Motor neuron (in vitro differentiated cells): ENCODE measurements at regions of chr1 and their contacts with region 1.

Region 1: GRCh38 chr1:203273206-203273868 is 32.0 kb upstream of the BTG2 start:
- ATAC-seq: peak; percentile 86 to 96 (median 90)
- H3K4me3 ChIP-seq: no peak overlapping the region
- H3K27ac ChIP-seq: peak overlapping the region; percentile 2 to 43
- H3K4me1 ChIP-seq: peaks cover 21% of the 10 kb centered on the region in 2 donors

Region 2: DNA sequence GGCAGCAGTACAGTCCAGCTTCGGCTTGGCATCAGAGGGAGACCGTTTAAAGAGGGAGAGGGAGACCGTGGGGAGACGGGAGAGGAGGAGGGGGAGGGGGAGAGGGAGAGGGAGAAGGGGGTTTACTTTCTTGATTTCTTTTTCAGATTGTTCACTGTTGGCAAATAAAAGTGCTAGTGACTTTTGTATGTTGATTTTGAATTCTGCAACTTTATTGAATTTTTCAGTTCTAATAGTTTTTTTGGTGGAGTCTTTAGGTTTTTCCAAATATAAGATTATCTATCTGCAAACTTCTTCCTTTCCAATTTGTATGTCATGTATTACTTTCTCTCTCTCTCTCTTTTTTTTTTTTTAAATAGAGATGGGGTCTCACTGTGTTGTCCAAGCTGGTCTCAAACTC is 820.8 kb before region 1 on chr1:
- in situ Hi-C with region 1: no loop called
- ATAC-seq: no peak
- H3K4me3 ChIP-seq: no peak overlapping the region
- H3K27ac ChIP-seq: no peak overlapping the region
- H3K4me1 ChIP-seq: no peaks in the 10 kb centered on the region

Region 3: DNA sequence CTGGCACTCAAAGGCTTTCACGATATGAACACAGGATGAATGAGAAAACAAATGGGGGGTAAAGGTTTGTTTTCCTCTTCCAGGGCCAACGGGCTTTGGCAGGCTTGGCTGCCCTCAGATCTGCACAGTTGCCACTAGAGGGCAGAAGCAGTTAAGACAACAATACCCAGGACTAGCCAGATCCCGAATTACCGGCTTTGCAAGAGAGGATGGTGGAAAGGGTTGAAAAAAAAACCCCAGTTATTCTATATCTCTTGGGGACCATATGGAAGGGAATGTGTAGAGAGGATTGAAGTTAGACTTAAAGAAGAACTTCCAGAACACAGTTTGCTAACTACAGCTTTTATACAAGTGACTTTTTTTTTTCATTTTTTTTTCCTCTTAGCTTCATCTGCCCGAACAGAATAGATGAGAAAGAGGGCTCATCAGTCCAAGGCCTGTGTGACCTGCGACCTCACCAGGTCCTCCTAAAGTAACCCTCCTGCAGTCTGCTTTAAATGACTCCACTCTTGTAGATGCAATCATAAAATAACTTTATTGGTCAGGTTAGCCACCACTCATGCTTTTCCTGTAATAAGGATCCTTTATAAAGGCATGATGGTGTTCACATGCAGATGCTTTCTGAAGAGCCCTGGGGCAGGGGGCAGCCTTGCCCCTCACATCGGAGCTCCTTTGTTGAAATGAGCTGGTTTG is 66.9 kb after region 1 on chr1:
- in situ Hi-C with region 1: loop called in 3 of 9 experiments (anchors 5 to 10 kb)
- ATAC-seq: peak; percentile 66 to 95 (median 90)
- H3K4me3 ChIP-seq: no peak overlapping the region
- H3K27ac ChIP-seq: no peak overlapping the region
- H3K4me1 ChIP-seq: peaks cover 12 to 13% of the 10 kb centered on the region in 2 donors

Region 4: DNA sequence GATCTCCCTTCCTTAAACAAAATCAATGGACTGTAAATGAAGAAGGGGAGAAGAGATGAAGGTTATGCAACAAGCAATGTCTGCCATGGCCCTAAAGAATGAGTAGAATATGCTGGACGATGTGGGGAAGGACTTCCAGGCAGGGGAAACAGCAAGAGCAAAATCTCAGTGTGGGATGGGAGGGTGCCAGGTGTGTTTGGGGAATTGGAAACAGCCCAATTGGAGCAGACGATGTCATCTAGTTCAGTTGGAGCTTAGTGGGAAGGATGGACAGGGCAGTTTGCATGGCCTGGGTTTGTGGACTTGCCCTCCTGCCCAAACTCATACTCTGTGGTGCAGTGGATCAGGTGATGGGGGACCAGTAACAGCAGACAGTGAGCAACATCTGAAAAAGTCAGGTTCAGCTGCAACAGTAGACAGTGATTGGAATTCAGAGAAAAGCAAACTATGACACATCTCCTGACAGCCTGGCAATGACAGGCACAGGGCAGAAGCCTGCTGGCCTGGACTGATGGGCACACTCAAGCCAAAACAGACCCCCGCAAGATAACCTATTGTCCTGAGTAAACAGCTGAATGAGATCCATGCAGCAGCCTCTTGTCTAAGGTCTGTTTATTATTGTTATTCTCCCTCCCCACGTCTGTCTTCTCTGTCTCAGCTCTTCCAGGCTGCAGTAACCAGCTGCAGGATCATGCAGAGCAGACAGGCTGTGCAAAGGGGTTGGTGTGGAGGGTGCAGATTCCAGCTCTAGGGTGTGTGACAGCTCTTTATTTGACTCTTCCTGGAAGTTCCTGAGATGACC is 151.7 kb after region 1 on chr1:
- in situ Hi-C with region 1: no loop called
- ATAC-seq: peak; percentile 39 to 92 (median 88)
- H3K4me3 ChIP-seq: no peak overlapping the region
- H3K27ac ChIP-seq: no peak overlapping the region
- H3K4me1 ChIP-seq: peaks cover 8 to 16% of the 10 kb centered on the region in 2 donors

Region 5: DNA sequence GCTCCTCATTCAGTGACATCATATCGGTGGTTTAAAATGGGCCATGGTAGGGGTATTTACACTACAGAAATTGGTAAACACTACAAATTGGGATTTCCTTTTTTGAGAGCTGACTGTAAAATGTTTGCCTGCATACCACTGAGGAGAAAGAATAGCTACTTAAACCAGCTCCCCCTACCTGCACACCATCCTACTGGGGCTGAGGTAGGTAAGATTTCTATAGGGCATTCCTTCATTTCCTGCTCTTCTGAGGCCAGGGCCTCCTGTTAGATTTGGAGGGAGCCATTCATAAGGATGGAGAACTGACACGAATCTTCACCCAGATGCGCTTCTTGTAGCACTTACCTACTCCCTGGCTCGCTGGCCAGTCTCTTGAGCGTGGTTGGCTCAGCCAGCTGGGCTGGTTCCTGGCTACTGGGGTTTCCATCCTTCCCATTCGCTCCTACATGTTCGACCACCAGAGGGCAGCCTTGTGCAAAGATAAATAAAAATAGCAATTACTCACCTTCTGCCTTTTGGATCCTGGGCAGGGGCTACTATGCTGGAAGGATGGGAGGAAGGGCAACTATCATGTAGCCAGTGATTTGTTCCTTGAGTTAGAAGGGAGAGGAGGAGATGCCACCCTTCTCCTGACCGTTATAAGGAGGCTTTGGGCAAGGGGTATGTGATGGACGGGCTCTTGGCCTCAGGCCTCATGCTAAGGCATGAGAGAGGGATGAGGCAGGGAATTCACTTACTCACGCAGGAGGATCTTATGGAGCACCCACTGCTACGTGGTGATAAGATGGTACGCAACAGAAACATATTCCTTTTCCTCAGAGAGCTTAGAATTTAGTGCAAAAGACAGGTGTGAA is 231.3 kb after region 1 on chr1:
- in situ Hi-C with region 1: no loop called
- ATAC-seq: peak; percentile 56 to 93 (median 72)
- H3K4me3 ChIP-seq: no peak overlapping the region
- H3K27ac ChIP-seq: no peak overlapping the region
- H3K4me1 ChIP-seq: peaks cover 32 to 42% of the 10 kb centered on the region in 2 donors